PC-3 (cell line): ENCODE measurements at regions of chr9 and their contacts with region 1.

Region 1: GRCh38 chr9:20426019-20426418 is 196.3 kb downstream of the MLLT3 start:
- DNase-seq: no peak
- ATAC-seq: no peak
- H3K4me3 ChIP-seq: no peak overlapping the region
- H3K27ac ChIP-seq: no peak overlapping the region
- H3K4me1 ChIP-seq: no peaks in the 10 kb centered on the region
- H3K27me3 ChIP-seq: no peaks in the 10 kb centered on the region
- CTCF ChIP-seq: no peak

Region 2: GRCh38 chr9:20552874-20553575 is 127.0 kb after region 1 on chr9:
- CTCF ChIA-PET with region 1: no interaction called
- POLR2A ChIA-PET with region 1: no interaction called
- intact Hi-C with region 1: loop called (anchors 5 kb)
- DNase-seq: peak; percentile 35
- ATAC-seq: peak; percentile 43
- H3K4me3 ChIP-seq: no peak overlapping the region
- H3K27ac ChIP-seq: peak overlapping the region; percentile 85
- H3K4me1 ChIP-seq: peaks cover 42% of the 10 kb centered on the region
- H3K27me3 ChIP-seq: no peaks in the 10 kb centered on the region
- CTCF ChIP-seq: peak; percentile 53